ENCODE measurements at regions of chr18 and their contacts with region 1.

Region 1: DNA sequence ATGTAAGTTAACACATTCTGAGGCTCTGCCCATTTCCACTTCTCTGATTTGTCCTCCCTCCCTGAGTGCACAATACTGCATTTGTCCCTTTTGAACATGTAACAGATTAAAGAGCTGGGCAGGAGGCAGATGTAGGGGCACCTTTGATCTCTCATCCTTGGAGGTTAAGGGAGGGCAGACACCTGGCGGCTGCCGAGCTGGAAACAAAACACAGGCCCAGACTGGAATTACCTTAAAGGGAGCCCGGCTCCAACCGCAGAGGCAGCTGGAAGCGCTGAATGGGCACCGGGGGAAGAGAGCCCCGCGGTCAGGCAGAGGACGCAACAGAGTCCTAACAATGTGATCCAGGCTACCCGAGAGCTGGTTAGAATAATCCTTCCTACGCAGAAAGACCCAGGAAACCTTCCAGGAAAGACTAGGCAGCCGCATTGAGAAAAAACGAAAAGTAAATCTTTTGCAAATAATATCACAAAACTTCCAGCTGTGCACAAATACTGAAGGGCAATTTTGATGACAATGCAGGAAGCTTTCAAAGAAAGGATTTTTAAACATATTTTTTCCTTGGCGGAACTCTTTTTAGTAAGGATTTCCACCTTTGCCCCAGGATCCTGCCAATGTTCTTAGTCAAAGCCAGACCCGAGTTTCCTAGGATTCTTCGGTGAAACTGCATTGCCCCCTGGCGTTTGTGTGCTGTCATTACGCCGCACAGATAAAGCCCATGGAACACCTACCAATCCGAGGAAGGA is 216.0 kb downstream of the TGIF1 start:
- DNase-seq: peak; percentile 29 to 86 (median 64)
- ATAC-seq: peak; percentile 77 to 89 (median 84)
- H3K4me3 ChIP-seq: peak overlapping the region in 1 of 2 donors; percentile 0
- H3K4me3 Mint-ChIP-seq: peak overlapping the region in 2 of 3 donors; percentile 34 to 40
- H3K27ac ChIP-seq: no peak overlapping the region
- H3K27ac Mint-ChIP-seq: no peak overlapping the region
- H3K4me1 ChIP-seq: peaks cover 3 to 6% of the 10 kb centered on the region in 2 experiments
- H3K4me1 Mint-ChIP-seq: peaks cover 4 to 7% (median 6%) of the 10 kb centered on the region in 3 donors
- H3K27me3 ChIP-seq: peaks cover 0 to 3% of the 10 kb centered on the region in 2 experiments
- H3K27me3 Mint-ChIP-seq: no peaks in the 10 kb centered on the region

Region 2: GRCh38 chr18:3281456-3282400 is 384.2 kb before region 1 on chr18:
- CTCF ChIA-PET with region 1: interaction called, 41 to 59 read pairs
- POLR2A ChIA-PET with region 1: no interaction called
- DNase-seq: peak in 2 of 35 experiments; percentile 20 to 84
- ATAC-seq: peak; percentile 61 to 89 (median 80)
- H3K4me3 ChIP-seq: no peak overlapping the region
- H3K4me3 Mint-ChIP-seq: no peak overlapping the region
- H3K27ac ChIP-seq: no peak overlapping the region
- H3K27ac Mint-ChIP-seq: no peak overlapping the region
- H3K4me1 ChIP-seq: no peaks in the 10 kb centered on the region
- H3K4me1 Mint-ChIP-seq: peaks cover 0 to 6% (median 0%) of the 10 kb centered on the region in 3 donors
- H3K27me3 ChIP-seq: peaks cover 0 to 3% of the 10 kb centered on the region in 2 experiments
- H3K27me3 Mint-ChIP-seq: no peaks in the 10 kb centered on the region

Region 3: DNA sequence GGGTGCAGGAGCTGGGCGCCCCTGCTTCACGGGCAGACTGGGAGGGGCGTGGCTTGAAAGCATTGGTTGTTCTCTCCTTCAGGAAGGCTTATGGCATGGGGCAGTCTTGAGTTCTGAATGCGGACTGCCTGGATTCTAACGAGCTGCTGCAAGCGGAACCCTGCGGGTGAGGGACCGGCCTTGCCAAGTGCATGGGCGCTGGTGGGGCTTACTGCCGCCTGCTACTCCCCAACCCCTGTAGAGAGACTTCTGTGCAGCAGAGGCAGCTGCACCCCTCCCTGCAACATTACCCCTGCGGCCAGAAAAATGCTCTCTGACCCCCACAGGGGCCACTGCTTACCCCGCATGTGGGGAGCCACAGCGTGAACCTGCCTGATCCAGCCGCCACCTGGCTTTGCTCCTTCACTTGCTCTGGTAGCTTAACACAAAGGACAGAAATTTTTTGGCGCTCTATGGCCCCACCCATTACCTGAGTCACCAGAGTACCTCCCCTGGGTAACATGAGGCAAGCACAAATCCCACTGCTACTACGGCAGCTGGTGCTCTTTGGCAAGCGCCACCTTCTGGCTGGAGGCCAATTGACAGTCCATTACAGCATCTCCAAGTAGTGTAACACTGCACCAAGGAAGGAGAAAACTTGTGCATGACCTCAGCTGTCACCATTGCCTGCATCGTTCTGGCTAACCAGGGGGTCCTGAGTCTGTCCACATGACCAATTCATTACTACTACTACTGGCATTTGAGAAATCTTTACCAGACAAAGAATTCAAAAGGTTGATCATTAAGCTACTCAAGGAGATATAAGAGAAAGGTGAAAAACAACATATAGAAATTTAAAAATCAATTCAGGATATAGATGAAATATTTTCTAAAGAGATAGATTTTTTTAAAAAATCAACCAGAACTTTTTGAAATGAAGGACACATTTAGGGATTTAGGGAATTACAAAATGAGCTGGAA is 368.6 kb before region 1 on chr18:
- CTCF ChIA-PET with region 1: interaction called, 7 to 19 read pairs
- POLR2A ChIA-PET with region 1: no interaction called
- DNase-seq: peak; percentile 84 to 95 (median 91)
- ATAC-seq: peak; percentile 95 to 100 (median 98)
- H3K4me3 ChIP-seq: peak overlapping the region; percentile 73 to 77
- H3K4me3 Mint-ChIP-seq: peak overlapping the region; percentile 93 to 94 (median 94)
- H3K27ac ChIP-seq: no peak overlapping the region
- H3K27ac Mint-ChIP-seq: peak overlapping the region; percentile 82 to 90
- H3K4me1 ChIP-seq: peaks cover 4 to 14% of the 10 kb centered on the region in 2 experiments
- H3K4me1 Mint-ChIP-seq: peaks cover 11 to 14% (median 13%) of the 10 kb centered on the region in 3 donors
- H3K27me3 ChIP-seq: peaks cover 0 to 4% of the 10 kb centered on the region in 2 experiments
- H3K27me3 Mint-ChIP-seq: peaks cover 29 to 32% of the 10 kb centered on the region in 2 donors

Region 4: DNA sequence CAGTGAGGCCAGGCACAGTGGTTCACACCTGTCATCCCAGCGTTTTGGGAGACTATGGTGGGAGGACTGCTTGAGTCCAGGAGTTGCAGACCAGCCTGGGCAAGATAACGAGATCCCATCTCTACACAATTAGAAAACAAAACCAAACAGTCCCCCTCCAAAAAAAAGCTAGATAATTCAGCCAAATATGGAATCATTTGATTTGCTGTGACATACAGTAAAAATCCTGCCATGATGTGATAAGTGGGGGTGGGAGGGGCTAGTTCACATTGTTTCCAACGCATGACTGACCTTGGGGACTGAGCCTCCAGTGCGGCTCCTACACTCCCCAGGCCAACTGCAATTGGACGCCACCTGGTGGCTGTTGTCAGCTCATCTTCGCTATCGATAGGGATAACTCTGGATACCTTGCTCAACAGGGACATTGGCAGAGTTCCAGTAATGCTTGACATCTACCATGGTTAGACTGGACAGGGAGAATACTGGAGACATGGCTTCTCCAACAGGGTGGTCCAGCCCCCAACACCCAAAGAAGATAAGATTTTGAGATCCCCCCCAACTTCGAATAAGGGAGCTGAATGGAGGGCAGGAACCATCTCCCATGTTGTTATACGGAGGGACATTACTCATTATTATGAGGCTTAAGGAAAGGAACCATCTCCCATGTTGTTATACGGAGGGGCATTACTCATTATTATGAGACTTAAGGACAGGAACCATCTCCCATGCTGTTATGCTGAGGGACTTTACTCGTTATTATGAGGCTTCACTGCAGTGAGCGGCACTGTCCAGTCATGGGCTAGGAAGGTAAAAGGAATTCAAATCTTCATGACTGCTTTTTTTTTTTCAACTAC is 80.1 kb before region 1 on chr18:
- CTCF ChIA-PET with region 1: interaction called, 11 to 25 read pairs
- POLR2A ChIA-PET with region 1: no interaction called
- DNase-seq: peak in 34 of 35 experiments; percentile 27 to 83 (median 58)
- ATAC-seq: peak in 3 of 4 experiments; percentile 65 to 87 (median 74)
- H3K4me3 ChIP-seq: no peak overlapping the region
- H3K4me3 Mint-ChIP-seq: no peak overlapping the region
- H3K27ac ChIP-seq: no peak overlapping the region
- H3K27ac Mint-ChIP-seq: no peak overlapping the region
- H3K4me1 ChIP-seq: peaks cover 0 to 8% of the 10 kb centered on the region in 2 experiments
- H3K4me1 Mint-ChIP-seq: peaks cover 9 to 25% (median 13%) of the 10 kb centered on the region in 3 donors
- H3K27me3 ChIP-seq: peaks cover 0 to 3% of the 10 kb centered on the region in 2 experiments
- H3K27me3 Mint-ChIP-seq: no peaks in the 10 kb centered on the region